HEK293 (cell line): ENCODE measurements at regions of chr16 and their contacts with region 1.

Region 1: GRCh38 chr16:4271176-4272066 is 1.4 kb downstream of the TFAP4 start:
- H3K4me3 ChIP-seq: peak overlapping the region; percentile 57
- H3K27ac ChIP-seq: peak overlapping the region; percentile 97
- H3K4me1 ChIP-seq: peaks cover 6% of the 10 kb centered on the region
- CTCF ChIP-seq: peak; percentile 43

Region 2: GRCh38 chr16:4176612-4177417 is 94.6 kb before region 1 on chr16:
- CTCF ChIA-PET with region 1: no interaction called
- POLR2A ChIA-PET with region 1: no interaction called
- H3K4me3 ChIP-seq: no peak overlapping the region
- H3K27ac ChIP-seq: no peak overlapping the region
- H3K4me1 ChIP-seq: no peaks in the 10 kb centered on the region
- CTCF ChIP-seq: no peak

Region 3: GRCh38 chr16:4193920-4194319 is 77.5 kb before region 1 on chr16:
- CTCF ChIA-PET with region 1: no interaction called
- POLR2A ChIA-PET with region 1: no interaction called
- H3K4me3 ChIP-seq: no peak overlapping the region
- H3K27ac ChIP-seq: no peak overlapping the region
- H3K4me1 ChIP-seq: no peaks in the 10 kb centered on the region
- CTCF ChIP-seq: no peak

Region 4: GRCh38 chr16:4315186-4316109 is 44.0 kb after region 1 on chr16 and contains the start of gene GLIS2:
- CTCF ChIA-PET with region 1: interaction called, 3 read pairs
- POLR2A ChIA-PET with region 1: interaction called, 11 read pairs
- H3K4me3 ChIP-seq: peak within 1 kb of the TSS; percentile 52
- H3K27ac ChIP-seq: peak within 1 kb of the TSS; percentile 66; the same call in 1 of the 2 replicates
- H3K4me1 ChIP-seq: peaks cover 4% of the 10 kb centered on the region; the same call in 1 of the 2 replicates
- CTCF ChIP-seq: no peak